Aorta (tissue), 5 donors: ENCODE measurements at regions of chr2 and their contacts with region 1.

Region 1: GRCh38 chr2:28392297-28393113 is at the start of gene FOSL2:
- DNase-seq: peak; percentile 98
- ATAC-seq: peak; percentile 82
- H3K4me3 ChIP-seq: peak within 1 kb of the TSS; percentile 92 to 95
- H3K27ac ChIP-seq: peak within 1 kb of the TSS; percentile 92 to 99
- H3K4me1 ChIP-seq: no peaks in the 10 kb centered on the region
- H3K27me3 ChIP-seq: no peaks in the 10 kb centered on the region
- total RNA-seq, gene FOSL2: 184 to 260 TPM

Region 2: GRCh38 chr2:27754138-27754588 is 638.3 kb before region 1 on chr2:
- intact Hi-C with region 1: loop called in 1 of 2 experiments (anchors 5 kb)
- DNase-seq: peak; percentile 89 to 92
- ATAC-seq: peak; percentile 85
- H3K4me3 ChIP-seq: no peak overlapping the region
- H3K27ac ChIP-seq: no peak overlapping the region
- H3K4me1 ChIP-seq: no peaks in the 10 kb centered on the region
- H3K27me3 ChIP-seq: no peaks in the 10 kb centered on the region

Region 3: GRCh38 chr2:27890146-27890923 is 502.2 kb before region 1 on chr2 and contains the starts of genes BABAM2 and RBKS:
- intact Hi-C with region 1: loop called (anchors 1 to 2 kb)
- DNase-seq: peak; percentile 91 to 96
- ATAC-seq: peak; percentile 97
- H3K4me3 ChIP-seq: peak within 1 kb of the TSS; percentile 58 to 77
- H3K27ac ChIP-seq: peak within 1 kb of the TSS; percentile 23 to 87
- H3K4me1 ChIP-seq: peaks cover 0 to under 1% of the 10 kb centered on the region in 2 donors
- H3K27me3 ChIP-seq: no peaks in the 10 kb centered on the region
- total RNA-seq, gene BABAM2: 52.3 to 53.8 TPM
- total RNA-seq, gene RBKS: 4.4 to 4.7 TPM

Region 4: GRCh38 chr2:28102455-28102874 is 290.0 kb before region 1 on chr2:
- intact Hi-C with region 1: loop called (anchors 5 kb)
- DNase-seq: no peak
- ATAC-seq: peak; percentile 82
- H3K4me3 ChIP-seq: no peak overlapping the region
- H3K27ac ChIP-seq: peak overlapping the region; percentile 43 to 57
- H3K4me1 ChIP-seq: peaks cover 0 to 7% of the 10 kb centered on the region in 2 donors
- H3K27me3 ChIP-seq: no peaks in the 10 kb centered on the region

Region 5: GRCh38 chr2:28342081-28342967 is 50.2 kb before region 1 on chr2:
- intact Hi-C with region 1: loop called (anchors 1 to 5 kb)
- DNase-seq: peak; percentile 87 to 89
- ATAC-seq: peak; percentile 78
- H3K4me3 ChIP-seq: no peak overlapping the region
- H3K27ac ChIP-seq: peak overlapping the region; percentile 19 to 90
- H3K4me1 ChIP-seq: peaks cover 0 to 4% of the 10 kb centered on the region in 2 donors
- H3K27me3 ChIP-seq: no peaks in the 10 kb centered on the region

Region 6: GRCh38 chr2:28521663-28522062 is 129.2 kb after region 1 on chr2:
- intact Hi-C with region 1: no loop called
- DNase-seq: no peak
- ATAC-seq: no peak
- H3K4me3 ChIP-seq: no peak overlapping the region
- H3K27ac ChIP-seq: no peak overlapping the region
- H3K4me1 ChIP-seq: no peaks in the 10 kb centered on the region
- H3K27me3 ChIP-seq: no peaks in the 10 kb centered on the region